Activated CD8-positive, alpha-beta T cell treated with anti-CD3 and anti-CD28 coated beads, Interleukin-2, amount 10 ng/mL, durations not matched to agents 7 days and 5 days (primary cell): ENCODE measurements at regions of chr16 and their contacts with region 1.

Region 1: GRCh38 chr16:82456683-82457082 is 170.1 kb upstream of the CDH13 start:
- DNase-seq: peak; percentile 52
- ATAC-seq: peak; percentile 65
- H3K4me3 Mint-ChIP-seq: no peak overlapping the region
- H3K27ac Mint-ChIP-seq: no peak overlapping the region
- H3K4me1 Mint-ChIP-seq: no peaks in the 10 kb centered on the region
- H3K27me3 Mint-ChIP-seq: peaks cover 4% of the 10 kb centered on the region

Region 2: DNA sequence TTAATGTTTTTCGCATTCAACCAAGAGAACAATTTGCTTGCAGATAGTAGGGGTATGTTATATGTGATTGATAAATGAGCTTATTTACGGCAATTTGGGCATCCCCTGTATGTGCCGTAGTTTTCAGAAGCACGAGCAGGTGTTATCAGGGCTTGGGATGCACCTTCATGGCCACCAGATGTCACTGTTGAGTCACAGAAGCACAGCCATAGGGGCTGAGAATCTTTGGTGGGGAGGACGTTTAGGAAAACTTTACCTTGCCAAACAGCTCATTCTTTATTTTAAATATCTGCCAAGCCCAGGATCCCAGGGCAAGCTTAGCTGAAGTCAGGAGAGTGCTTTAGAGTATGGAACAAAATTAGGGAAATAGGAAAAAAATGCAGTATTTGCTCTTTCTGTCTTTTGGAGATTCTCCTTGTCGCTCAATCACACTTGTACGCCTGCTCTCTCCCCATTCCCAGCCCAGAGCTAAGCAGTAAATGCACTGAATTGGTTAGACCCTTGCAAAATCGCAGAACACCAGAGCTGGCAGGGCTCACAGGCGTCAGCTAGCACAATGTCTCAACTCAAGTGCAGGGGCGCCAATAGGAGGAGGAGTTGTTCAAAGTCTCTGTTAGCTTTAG is 193.1 kb before region 1 on chr16:
- CTCF ChIA-PET with region 1: interaction called, 18 read pairs
- POLR2A ChIA-PET with region 1: no interaction called
- DNase-seq: peak; percentile 69
- ATAC-seq: peak; percentile 87
- H3K4me3 Mint-ChIP-seq: no peak overlapping the region
- H3K27ac Mint-ChIP-seq: no peak overlapping the region
- H3K4me1 Mint-ChIP-seq: no peaks in the 10 kb centered on the region
- H3K27me3 Mint-ChIP-seq: peaks cover 6% of the 10 kb centered on the region

Region 3: GRCh38 chr16:82439671-82440293 is 16.9 kb before region 1 on chr16:
- CTCF ChIA-PET with region 1: interaction called, 10 read pairs
- POLR2A ChIA-PET with region 1: no interaction called
- DNase-seq: no peak
- ATAC-seq: no peak
- H3K4me3 Mint-ChIP-seq: no peak overlapping the region
- H3K27ac Mint-ChIP-seq: no peak overlapping the region
- H3K4me1 Mint-ChIP-seq: no peaks in the 10 kb centered on the region
- H3K27me3 Mint-ChIP-seq: peaks cover 2% of the 10 kb centered on the region

Region 4: DNA sequence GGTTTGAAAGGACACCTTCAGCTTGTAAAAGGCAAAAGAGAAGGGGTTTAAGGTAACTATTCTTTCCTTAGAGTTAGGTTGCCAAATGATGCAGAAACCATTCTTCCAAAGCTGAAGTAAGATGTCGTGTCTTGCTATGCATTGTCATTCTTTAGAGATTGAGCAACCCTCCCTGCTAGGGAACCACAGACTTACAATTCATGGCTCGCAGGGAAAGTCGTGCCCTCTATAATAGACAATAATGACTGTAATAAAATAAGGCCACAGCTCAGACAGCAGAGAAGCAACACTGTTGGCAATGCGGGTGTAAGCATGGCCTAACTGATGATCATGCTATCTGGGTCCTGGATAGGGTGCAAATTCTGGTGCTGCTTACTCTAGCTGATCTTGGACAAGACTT is 40.5 kb after region 1 on chr16:
- CTCF ChIA-PET with region 1: no interaction called
- POLR2A ChIA-PET with region 1: no interaction called
- DNase-seq: no peak
- ATAC-seq: no peak
- H3K4me3 Mint-ChIP-seq: no peak overlapping the region
- H3K27ac Mint-ChIP-seq: no peak overlapping the region
- H3K4me1 Mint-ChIP-seq: no peaks in the 10 kb centered on the region
- H3K27me3 Mint-ChIP-seq: no peaks in the 10 kb centered on the region